HEK293 (cell line): ENCODE measurements at regions of chr15 and their contacts with region 1.

Region 1: GRCh38 chr15:33124811-33125210 is 69.7 kb downstream of the FMN1 start:
- H3K4me3 ChIP-seq: no peak overlapping the region
- H3K27ac ChIP-seq: no peak overlapping the region
- H3K4me1 ChIP-seq: peaks cover 16% of the 10 kb centered on the region
- CTCF ChIP-seq: no peak

Region 2: GRCh38 chr15:33086507-33087121 is 38.2 kb before region 1 on chr15:
- CTCF ChIA-PET with region 1: interaction called, 185 read pairs
- POLR2A ChIA-PET with region 1: interaction called, 4 read pairs
- H3K4me3 ChIP-seq: no peak overlapping the region
- H3K27ac ChIP-seq: no peak overlapping the region
- H3K4me1 ChIP-seq: peaks cover 12% of the 10 kb centered on the region
- CTCF ChIP-seq: 0 out of 2 replicates have a peak, but pooled peaks have one; percentile 14